Transverse colon (tissue), 4 donors: ENCODE measurements at regions of chr5 and their contacts with region 1.

Region 1: DNA sequence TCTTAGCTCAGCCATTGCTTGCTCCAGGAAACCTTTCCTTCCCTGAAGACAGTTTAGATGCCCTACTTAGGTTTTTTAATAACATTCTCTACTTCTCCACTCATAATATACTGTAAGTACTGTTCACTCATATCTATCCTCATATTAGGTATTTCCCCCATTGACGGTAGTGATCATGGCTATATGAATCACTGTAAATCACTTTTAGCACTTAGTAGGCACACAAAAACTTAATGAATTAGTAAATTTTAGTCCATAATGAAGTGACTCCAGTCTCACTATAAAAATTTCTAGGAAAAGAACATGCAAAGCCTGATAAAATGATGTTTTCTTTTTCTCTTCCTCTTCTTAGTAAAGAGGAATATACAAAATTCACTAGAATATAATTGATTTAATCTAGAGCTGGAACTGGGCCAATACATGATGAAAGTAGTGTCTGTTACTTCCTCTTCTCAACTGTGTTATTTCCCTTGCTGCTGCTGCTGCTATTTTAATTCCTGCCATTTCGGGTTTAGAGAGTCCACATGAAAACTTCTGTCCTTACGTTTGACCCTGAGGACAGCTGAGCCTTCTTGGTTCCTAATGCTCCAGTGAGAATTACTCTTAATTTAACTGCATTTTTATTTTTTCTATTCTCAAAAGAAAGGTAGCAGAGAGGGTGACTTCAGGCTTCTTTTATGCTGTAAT is 73.5 kb downstream of the LNPEP start:
- DNase-seq: no peak
- H3K4me3 ChIP-seq: no peak overlapping the region
- H3K27ac ChIP-seq: no peak overlapping the region
- H3K4me1 ChIP-seq: peaks cover 0 to 13% (median 0%) of the 10 kb centered on the region in 4 donors
- H3K27me3 ChIP-seq: no peaks in the 10 kb centered on the region
- CTCF ChIP-seq: no peak
- EP300 ChIP-seq: no peak
- POLR2A ChIP-seq: no peak

Region 2: DNA sequence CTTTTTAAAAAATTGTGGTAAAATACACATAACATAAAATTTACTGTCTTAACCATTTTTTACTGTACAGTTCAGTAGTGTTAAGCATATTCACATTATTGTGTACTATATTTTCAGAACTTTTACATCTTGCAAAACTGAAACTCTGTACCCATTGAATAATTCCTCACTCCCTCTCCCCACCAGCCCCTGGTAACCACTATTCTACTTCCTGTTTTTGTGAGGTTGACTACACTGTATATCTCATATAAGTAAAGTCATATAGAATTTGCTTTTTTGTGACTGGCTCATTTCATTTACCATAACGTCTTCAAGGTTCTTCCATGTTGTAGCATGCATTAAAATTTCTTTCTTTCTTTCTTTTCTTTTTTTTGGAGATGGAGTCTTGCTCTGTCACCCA is 13.5 kb after region 1 on chr5:
- in situ Hi-C with region 1: no loop called
- intact Hi-C with region 1: no loop called
- DNase-seq: no peak
- H3K4me3 ChIP-seq: no peak overlapping the region
- H3K27ac ChIP-seq: no peak overlapping the region
- H3K4me1 ChIP-seq: peaks cover 0 to 12% (median 2%) of the 10 kb centered on the region in 4 donors
- H3K27me3 ChIP-seq: no peaks in the 10 kb centered on the region
- CTCF ChIP-seq: no peak
- EP300 ChIP-seq: no peak
- POLR2A ChIP-seq: no peak

Region 3: DNA sequence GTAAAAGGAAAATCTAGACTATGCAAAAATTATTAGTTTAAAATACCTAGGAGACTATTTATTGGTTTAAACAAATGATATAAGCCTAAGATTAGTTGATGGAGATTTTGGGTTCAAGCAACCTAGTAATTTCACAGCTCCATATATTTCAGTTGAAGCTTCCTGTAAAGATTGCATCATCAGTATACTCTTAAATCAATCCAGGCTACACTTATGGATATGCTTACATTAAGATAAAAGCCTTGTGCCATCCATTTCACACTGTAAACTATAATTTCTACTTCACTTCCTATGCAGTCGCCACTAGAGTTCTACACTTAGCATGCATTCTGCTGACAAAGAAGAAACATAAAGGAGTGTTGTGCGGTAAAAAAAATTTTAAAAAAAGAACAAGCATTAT is 140.4 kb after region 1 on chr5:
- in situ Hi-C with region 1: no loop called
- intact Hi-C with region 1: loop called (anchors 10 kb)
- DNase-seq: no peak
- H3K4me3 ChIP-seq: no peak overlapping the region
- H3K27ac ChIP-seq: no peak overlapping the region
- H3K4me1 ChIP-seq: no peaks in the 10 kb centered on the region
- H3K27me3 ChIP-seq: no peaks in the 10 kb centered on the region
- CTCF ChIP-seq: no peak
- EP300 ChIP-seq: no peak
- POLR2A ChIP-seq: no peak

Region 4: GRCh38 chr5:97355775-97356174 is 346.4 kb after region 1 on chr5:
- in situ Hi-C with region 1: no loop called
- intact Hi-C with region 1: no loop called
- DNase-seq: no peak
- H3K4me3 ChIP-seq: no peak overlapping the region
- H3K27ac ChIP-seq: no peak overlapping the region
- H3K4me1 ChIP-seq: no peaks in the 10 kb centered on the region
- H3K27me3 ChIP-seq: no peaks in the 10 kb centered on the region
- CTCF ChIP-seq: no peak
- EP300 ChIP-seq: no peak
- POLR2A ChIP-seq: no peak